IMR-90 (cell line): ENCODE measurements at regions of chr5 and their contacts with region 1.

Region 1: DNA sequence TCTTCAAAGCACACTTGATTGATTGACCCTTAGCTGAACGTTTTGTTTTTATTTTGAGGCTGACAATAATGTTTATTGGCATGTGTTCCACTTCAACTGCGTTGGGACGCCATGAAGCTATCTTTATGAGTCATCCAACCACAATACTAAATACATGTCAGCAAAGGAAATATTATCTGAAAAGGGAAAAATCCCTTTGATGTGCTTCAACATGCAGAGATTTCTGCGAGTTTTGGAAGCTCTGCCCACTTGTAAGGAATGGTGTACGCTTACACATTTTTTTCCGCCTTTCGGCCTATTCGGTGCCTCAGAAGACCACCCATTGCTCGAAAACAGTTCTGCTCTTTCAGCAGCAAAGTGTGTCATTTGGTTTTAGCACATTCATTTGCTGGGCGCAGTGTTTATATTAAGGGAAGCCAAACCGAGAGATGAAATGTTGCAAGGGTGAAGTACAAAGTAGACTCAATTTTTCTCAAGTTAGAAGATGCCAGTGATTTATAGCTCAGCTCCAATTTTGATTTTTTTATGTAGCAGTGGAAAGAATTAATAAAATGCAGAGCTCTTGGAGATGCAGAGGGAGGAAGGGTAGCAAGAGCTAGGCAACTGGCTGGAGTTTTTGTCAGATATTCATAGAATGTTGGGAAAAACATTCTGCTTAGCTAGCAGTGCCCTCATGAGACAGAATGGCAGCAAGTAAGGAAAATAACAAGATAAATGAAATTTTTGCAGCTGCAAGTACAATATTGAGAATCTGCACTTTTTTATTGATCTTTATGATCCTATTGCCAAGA is 68.9 kb downstream of the PRDM6 start:
- DNase-seq: peak; percentile 83
- ATAC-seq: peak; percentile 61
- H3K4me3 ChIP-seq: no peak overlapping the region
- H3K27ac ChIP-seq: no peak overlapping the region
- H3K4me1 ChIP-seq: peaks cover 12% of the 10 kb centered on the region
- H3K27me3 ChIP-seq: peaks cover 29% of the 10 kb centered on the region
- CTCF ChIP-seq: peak; percentile 48
- POLR2A ChIP-seq: no peak
- RAD21 ChIP-seq: peak; percentile 50

Region 2: DNA sequence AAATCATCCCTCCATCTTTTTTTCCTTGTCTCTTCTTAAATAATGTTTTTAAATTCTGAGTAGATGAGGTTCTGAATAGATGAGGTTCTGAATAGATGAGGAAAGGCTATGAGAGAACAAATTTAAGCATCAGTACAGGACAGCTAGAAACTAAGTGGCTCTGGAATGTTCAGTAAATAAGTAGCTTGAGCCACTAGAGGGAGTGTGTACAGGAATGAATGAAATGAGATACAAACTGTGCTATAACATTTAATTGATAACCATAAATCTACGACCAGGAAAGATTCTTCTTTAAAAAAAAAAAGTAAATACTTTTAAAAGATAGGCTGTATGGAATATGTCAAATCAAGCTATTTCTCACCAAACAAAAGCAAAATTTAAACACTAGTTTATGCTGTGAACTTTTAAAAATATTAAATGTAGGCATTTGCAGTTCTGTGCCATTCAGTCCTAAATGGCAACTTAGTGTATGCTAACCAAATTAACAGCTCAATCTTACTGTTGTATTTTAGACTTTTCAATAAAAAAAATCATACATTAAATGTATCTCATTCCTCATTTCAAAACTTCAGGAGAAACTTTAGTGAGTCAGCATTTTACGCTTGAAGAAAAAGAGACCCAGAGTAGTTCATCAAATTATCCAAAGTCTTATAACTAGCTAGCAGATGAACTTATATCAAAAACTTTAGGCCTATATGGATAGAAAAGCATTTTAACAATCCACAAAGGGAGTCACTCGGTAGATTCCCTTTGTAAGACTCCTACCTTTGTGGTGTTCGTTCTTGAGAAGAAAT is 453.5 kb before region 1 on chr5:
- CTCF ChIA-PET with region 1: interaction called, 10 read pairs
- POLR2A ChIA-PET with region 1: no interaction called
- dilution Hi-C with region 1: no loop called
- in situ Hi-C with region 1: no loop called
- intact Hi-C with region 1: loop called (anchors 1 kb)
- DNase-seq: peak; percentile 67
- ATAC-seq: peak; percentile 87
- H3K4me3 ChIP-seq: no peak overlapping the region
- H3K27ac ChIP-seq: no peak overlapping the region
- H3K4me1 ChIP-seq: no peaks in the 10 kb centered on the region
- H3K27me3 ChIP-seq: peaks cover 2% of the 10 kb centered on the region; the same call in 1 of the 2 replicates
- CTCF ChIP-seq: peak; percentile 67
- POLR2A ChIP-seq: no peak
- RAD21 ChIP-seq: peak; percentile 58

Region 3: GRCh38 chr5:122896598-122897282 is 261.2 kb before region 1 on chr5:
- CTCF ChIA-PET with region 1: no interaction called
- POLR2A ChIA-PET with region 1: no interaction called
- dilution Hi-C with region 1: no loop called
- in situ Hi-C with region 1: no loop called
- intact Hi-C with region 1: loop called (anchors 5 kb)
- DNase-seq: peak; percentile 85
- ATAC-seq: peak; percentile 91
- H3K4me3 ChIP-seq: no peak overlapping the region
- H3K27ac ChIP-seq: no peak overlapping the region
- H3K4me1 ChIP-seq: peaks cover 3% of the 10 kb centered on the region; the same call in 1 of the 2 replicates
- H3K27me3 ChIP-seq: no peaks in the 10 kb centered on the region; the same call in 1 of the 2 replicates
- CTCF ChIP-seq: peak; percentile 61
- POLR2A ChIP-seq: no peak
- RAD21 ChIP-seq: peak; percentile 65

Region 4: GRCh38 chr5:123089914-123090670 is 67.9 kb before region 1 on chr5:
- CTCF ChIA-PET with region 1: no interaction called
- POLR2A ChIA-PET with region 1: no interaction called
- dilution Hi-C with region 1: no loop called
- in situ Hi-C with region 1: no loop called
- intact Hi-C with region 1: loop called (anchors 2 kb)
- DNase-seq: peak; percentile 27
- ATAC-seq: peak; percentile 52
- H3K4me3 ChIP-seq: peak overlapping the region; percentile 58
- H3K27ac ChIP-seq: peak overlapping the region; percentile 22; the same call in 1 of the 2 replicates
- H3K4me1 ChIP-seq: peaks cover 7% of the 10 kb centered on the region; the same call in 1 of the 2 replicates
- H3K27me3 ChIP-seq: peaks cover 61% of the 10 kb centered on the region
- CTCF ChIP-seq: no peak
- POLR2A ChIP-seq: no peak
- RAD21 ChIP-seq: no peak

Region 5: GRCh38 chr5:123455640-123456039 is 297.7 kb after region 1 on chr5:
- CTCF ChIA-PET with region 1: no interaction called
- POLR2A ChIA-PET with region 1: no interaction called
- dilution Hi-C with region 1: no loop called
- in situ Hi-C with region 1: no loop called
- intact Hi-C with region 1: no loop called
- DNase-seq: no peak
- ATAC-seq: no peak
- H3K4me3 ChIP-seq: no peak overlapping the region
- H3K27ac ChIP-seq: no peak overlapping the region
- H3K4me1 ChIP-seq: peaks cover 6% of the 10 kb centered on the region
- H3K27me3 ChIP-seq: no peaks in the 10 kb centered on the region
- CTCF ChIP-seq: no peak
- POLR2A ChIP-seq: no peak
- RAD21 ChIP-seq: no peak

Region 6: GRCh38 chr5:123496892-123497291 is 338.9 kb after region 1 on chr5:
- CTCF ChIA-PET with region 1: no interaction called
- POLR2A ChIA-PET with region 1: no interaction called
- dilution Hi-C with region 1: no loop called
- in situ Hi-C with region 1: no loop called
- intact Hi-C with region 1: no loop called
- DNase-seq: peak; percentile 46
- ATAC-seq: no peak
- H3K4me3 ChIP-seq: no peak overlapping the region
- H3K27ac ChIP-seq: no peak overlapping the region
- H3K4me1 ChIP-seq: peaks cover 2% of the 10 kb centered on the region; the same call in 1 of the 2 replicates
- H3K27me3 ChIP-seq: no peaks in the 10 kb centered on the region
- CTCF ChIP-seq: no peak
- POLR2A ChIP-seq: no peak
- RAD21 ChIP-seq: no peak

Region 7: DNA sequence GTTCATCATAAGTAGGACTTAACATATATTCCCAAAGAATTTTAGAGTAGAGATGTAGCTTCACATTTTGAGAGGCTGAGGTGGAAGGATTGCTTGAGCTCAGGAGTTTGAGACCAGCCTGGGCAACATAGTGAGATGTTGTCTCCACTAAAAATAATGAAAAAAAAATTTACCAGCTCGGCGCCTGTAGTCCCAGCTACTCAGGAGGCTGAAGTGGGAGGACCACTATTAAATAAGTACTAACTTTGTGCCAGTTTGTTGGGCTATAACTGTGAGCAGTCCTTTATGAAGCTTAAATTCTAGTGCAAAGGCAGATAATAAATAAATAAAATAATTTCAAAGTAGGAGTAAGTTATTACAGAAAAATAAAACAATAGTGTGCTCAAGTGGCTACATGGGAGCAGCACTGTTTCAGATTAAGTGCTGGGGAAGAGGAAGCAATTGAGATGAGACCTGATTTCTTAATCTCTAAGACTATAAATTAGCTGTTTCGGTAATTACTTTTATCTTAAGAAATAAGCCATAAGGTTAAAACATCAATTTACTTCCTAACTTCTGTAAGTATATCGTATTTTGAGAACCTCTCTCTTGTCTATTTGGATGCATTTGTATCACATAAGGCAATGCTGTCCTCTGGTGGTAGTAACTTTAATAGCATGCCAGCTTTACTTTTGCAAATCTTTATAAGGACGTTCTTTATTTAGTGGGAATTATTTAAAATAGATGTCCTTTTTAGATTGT is 452.8 kb after region 1 on chr5:
- CTCF ChIA-PET with region 1: no interaction called
- POLR2A ChIA-PET with region 1: no interaction called
- dilution Hi-C with region 1: no loop called
- in situ Hi-C with region 1: no loop called
- intact Hi-C with region 1: loop called (anchors 2 kb)
- DNase-seq: peak; percentile 80
- ATAC-seq: peak; percentile 81
- H3K4me3 ChIP-seq: no peak overlapping the region
- H3K27ac ChIP-seq: no peak overlapping the region
- H3K4me1 ChIP-seq: no peaks in the 10 kb centered on the region
- H3K27me3 ChIP-seq: no peaks in the 10 kb centered on the region
- CTCF ChIP-seq: peak; percentile 98
- POLR2A ChIP-seq: no peak
- RAD21 ChIP-seq: peak; percentile 93